PC-9 (cell line): ENCODE measurements at regions of chr7 and their contacts with region 1.

Region 1: GRCh38 chr7:92768501-92769393 is 67.6 kb downstream of the CDK6 start:
- DNase-seq: no peak
- H3K4me3 ChIP-seq: no peak overlapping the region
- H3K27ac ChIP-seq: peak overlapping the region; percentile 7; the same call in 1 of the 2 replicates
- H3K4me1 ChIP-seq: peaks cover 56% of the 10 kb centered on the region
- H3K27me3 ChIP-seq: no peaks in the 10 kb centered on the region
- CTCF ChIP-seq: no peak

Region 2: GRCh38 chr7:92621026-92621540 is 147.7 kb before region 1 on chr7:
- CTCF ChIA-PET with region 1: no interaction called
- POLR2A ChIA-PET with region 1: no interaction called
- intact Hi-C with region 1: loop called (anchors 5 kb)
- DNase-seq: peak; percentile 70 to 75
- H3K4me3 ChIP-seq: no peak overlapping the region
- H3K27ac ChIP-seq: peak overlapping the region; percentile 34; the same call in 1 of the 2 replicates
- H3K4me1 ChIP-seq: peaks cover 23% of the 10 kb centered on the region
- H3K27me3 ChIP-seq: no peaks in the 10 kb centered on the region
- CTCF ChIP-seq: peak; percentile 84

Region 3: DNA sequence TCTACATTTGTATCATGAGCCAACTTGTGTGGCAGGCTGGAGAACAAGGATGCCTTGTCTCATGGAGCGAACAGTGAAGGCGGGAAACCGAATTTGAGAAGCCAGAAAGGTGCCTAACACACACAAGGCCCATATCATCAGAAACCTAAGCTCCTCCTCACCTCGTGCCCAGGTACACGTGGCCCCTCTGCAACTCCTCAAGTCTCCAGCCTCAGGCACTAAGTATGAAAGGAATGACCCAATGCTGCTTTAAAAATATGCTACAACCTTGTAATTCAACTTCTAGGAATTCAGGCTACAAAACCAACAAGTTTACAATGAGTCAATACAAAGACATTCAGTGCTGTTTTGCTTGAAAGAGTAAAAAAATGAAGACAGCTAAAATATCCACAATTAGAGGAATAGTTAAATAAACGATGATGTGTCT is 28.0 kb before region 1 on chr7:
- CTCF ChIA-PET with region 1: no interaction called
- POLR2A ChIA-PET with region 1: no interaction called
- intact Hi-C with region 1: loop called (anchors 1 kb)
- DNase-seq: peak; percentile 75 to 94
- H3K4me3 ChIP-seq: no peak overlapping the region
- H3K27ac ChIP-seq: peak overlapping the region; percentile 41
- H3K4me1 ChIP-seq: peaks cover 27% of the 10 kb centered on the region
- H3K27me3 ChIP-seq: no peaks in the 10 kb centered on the region
- CTCF ChIP-seq: no peak

Region 4: GRCh38 chr7:92809397-92810241 is 40.9 kb after region 1 on chr7:
- CTCF ChIA-PET with region 1: no interaction called
- POLR2A ChIA-PET with region 1: interaction called, 5 read pairs
- intact Hi-C with region 1: loop called (anchors 2 kb)
- DNase-seq: peak; percentile 76 to 86
- H3K4me3 ChIP-seq: peak overlapping the region; percentile 3; the same call in 1 of the 2 replicates
- H3K27ac ChIP-seq: peak overlapping the region; percentile 90
- H3K4me1 ChIP-seq: peaks cover 25% of the 10 kb centered on the region
- H3K27me3 ChIP-seq: no peaks in the 10 kb centered on the region
- CTCF ChIP-seq: no peak

Region 5: GRCh38 chr7:93055543-93056107 is 286.9 kb after region 1 on chr7:
- CTCF ChIA-PET with region 1: no interaction called
- POLR2A ChIA-PET with region 1: no interaction called
- intact Hi-C with region 1: loop called (anchors 5 kb)
- DNase-seq: peak in 1 of 2 experiments; percentile 50
- H3K4me3 ChIP-seq: no peak overlapping the region
- H3K27ac ChIP-seq: no peak overlapping the region
- H3K4me1 ChIP-seq: no peaks in the 10 kb centered on the region
- H3K27me3 ChIP-seq: no peaks in the 10 kb centered on the region
- CTCF ChIP-seq: peak; percentile 87